ENCODE measurements at regions of chr6 and their contacts with region 1.

Region 1: GRCh38 chr6:87887266-87887665 is 160.4 kb upstream of the SPACA1 start:
- DNase-seq: no peak
- H3K4me3 ChIP-seq: no peak overlapping the region
- H3K27ac ChIP-seq: no peak overlapping the region
- H3K4me1 ChIP-seq: peaks cover 25% of the 10 kb centered on the region
- CTCF ChIP-seq: no peak

Region 2: DNA sequence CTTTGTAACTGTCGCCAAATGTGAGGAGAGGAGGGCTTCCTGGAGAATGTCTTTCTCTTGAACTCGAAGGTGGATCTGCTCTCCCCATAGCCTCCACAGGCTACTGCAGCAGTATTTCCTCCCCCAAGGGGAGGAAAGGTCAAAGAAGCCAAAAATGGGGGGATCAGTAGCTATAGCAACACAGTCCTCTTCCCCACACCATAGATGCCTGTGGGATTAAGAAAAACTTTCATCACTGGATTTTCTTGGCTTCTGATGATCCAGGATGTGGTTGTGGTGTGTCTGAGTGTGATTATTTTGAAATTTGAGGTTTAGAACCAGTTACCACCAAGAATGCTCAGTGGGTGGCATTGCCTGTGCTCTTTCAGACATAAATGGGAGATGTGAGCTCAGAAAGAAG is 20.3 kb after region 1 on chr6:
- CTCF ChIA-PET with region 1: interaction called, 5 read pairs
- POLR2A ChIA-PET with region 1: interaction called, 318 read pairs
- intact Hi-C with region 1: no loop called
- DNase-seq: peak; percentile 72
- H3K4me3 ChIP-seq: no peak overlapping the region
- H3K27ac ChIP-seq: peak overlapping the region; percentile 99
- H3K4me1 ChIP-seq: peaks cover 98% of the 10 kb centered on the region
- CTCF ChIP-seq: no peak

Region 3: GRCh38 chr6:87914637-87915395 is 27.6 kb after region 1 on chr6:
- CTCF ChIA-PET with region 1: interaction called, 5 read pairs
- POLR2A ChIA-PET with region 1: interaction called, 318 read pairs
- intact Hi-C with region 1: no loop called
- DNase-seq: peak; percentile 58
- H3K4me3 ChIP-seq: no peak overlapping the region
- H3K27ac ChIP-seq: peak overlapping the region; percentile 99
- H3K4me1 ChIP-seq: peaks cover 95% of the 10 kb centered on the region
- CTCF ChIP-seq: no peak

Measured in OCI-LY7 (cell line).